ENCODE measurements at regions of chr19 and their contacts with region 1.

Region 1: DNA sequence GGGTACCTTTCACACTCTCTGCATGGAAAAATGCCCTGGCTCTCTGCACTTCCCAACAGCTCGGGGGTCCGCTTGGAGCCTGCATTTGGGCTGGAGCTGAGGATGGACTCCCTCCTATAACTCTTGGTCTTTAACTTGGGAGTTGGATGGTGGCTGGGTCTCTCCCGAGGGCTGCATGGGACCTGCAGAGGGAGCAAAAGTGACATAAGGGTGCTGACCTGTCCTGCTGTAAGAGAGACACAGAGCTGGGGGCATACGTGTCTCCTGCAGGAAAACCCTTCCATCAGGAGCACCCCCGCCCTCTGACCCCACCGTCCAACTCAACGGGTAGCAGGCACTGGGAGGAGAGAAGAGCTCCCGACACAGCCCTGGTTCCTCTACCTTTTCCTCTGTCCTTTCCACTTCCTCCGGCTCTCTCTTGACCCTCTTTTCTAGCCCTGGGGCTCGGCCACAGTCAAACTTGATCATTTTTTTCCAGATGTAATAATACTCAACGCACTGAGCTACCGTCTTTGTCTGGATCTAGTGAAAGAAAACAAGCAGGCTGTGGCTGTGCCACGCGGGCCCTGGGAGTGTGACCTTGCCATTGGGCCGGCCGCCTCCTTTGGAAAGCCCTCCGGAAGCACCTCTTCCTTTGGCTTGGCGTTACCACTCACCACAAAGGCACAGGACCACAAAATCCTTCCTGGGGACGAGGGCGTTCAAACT is 6.8 kb upstream of the NAPA start:
- DNase-seq: no peak
- H3K4me3 ChIP-seq: no peak overlapping the region
- H3K27ac ChIP-seq: peak overlapping the region in 1 of 2 donors; percentile 58
- H3K4me1 ChIP-seq: no peaks in the 10 kb centered on the region
- H3K27me3 ChIP-seq: no peaks in the 10 kb centered on the region
- CTCF ChIP-seq: no peak
- POLR2A ChIP-seq: no peak

Region 2: GRCh38 chr19:47428177-47428894 is 93.3 kb before region 1 on chr19:
- intact Hi-C with region 1: no loop called
- DNase-seq: peak; percentile 90 to 93
- H3K4me3 ChIP-seq: peak overlapping the region in 2 of 3 donors; percentile 22 to 48
- H3K27ac ChIP-seq: peak overlapping the region; percentile 15 to 61
- H3K4me1 ChIP-seq: peaks cover 3 to 13% of the 10 kb centered on the region in 2 donors
- H3K27me3 ChIP-seq: peaks cover 3 to 30% of the 10 kb centered on the region in 2 donors
- CTCF ChIP-seq: no peak
- POLR2A ChIP-seq: no peak

Region 3: DNA sequence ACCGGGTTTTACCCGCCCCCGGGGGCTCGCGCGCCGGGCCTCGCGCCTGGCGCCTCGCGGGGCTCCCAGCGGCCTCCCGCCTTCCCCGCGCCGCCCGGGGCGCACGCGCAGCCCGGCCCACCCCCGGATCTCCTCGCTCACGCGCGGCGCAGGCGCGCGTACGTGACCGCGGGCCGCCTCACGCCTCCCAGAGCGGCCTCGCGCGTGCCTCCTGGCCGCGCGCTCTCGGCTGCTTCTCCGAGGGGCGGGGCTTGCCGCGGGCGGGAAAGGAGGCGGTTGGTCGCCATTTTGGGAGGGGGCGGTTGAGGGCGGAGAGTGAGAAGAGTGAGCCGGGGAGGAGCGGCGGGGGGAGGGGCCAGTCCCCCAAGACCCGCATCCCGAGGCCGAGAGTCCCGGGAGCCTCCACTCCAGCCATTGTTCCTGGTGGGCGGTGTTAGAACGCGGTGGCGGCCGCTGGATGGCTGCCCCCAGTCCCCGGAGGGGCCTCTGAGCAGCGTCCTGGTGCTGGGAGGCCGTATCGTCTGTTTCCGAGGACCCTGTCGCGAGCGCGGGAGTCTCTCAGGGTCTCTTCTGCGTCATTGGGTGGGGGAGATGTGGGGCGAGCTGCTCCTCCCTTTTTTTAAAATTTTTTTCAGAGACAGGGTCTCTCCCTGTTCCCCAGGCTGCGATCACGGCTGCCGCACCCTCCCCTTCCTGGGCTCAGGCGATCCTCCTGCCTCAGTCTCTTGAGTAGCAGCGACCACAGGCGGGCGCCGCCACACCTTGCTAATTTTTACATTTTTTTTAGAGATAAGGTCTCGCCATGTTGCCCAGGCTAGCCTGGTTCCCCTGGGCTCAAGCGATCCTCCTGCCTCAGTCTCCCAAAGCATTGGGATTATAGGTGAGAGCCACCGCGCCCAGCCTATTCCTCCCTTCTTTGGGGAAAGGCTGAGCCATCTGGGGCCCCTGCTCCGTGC is 51.7 kb after region 1 on chr19 and contains the start of gene ZNF541:
- intact Hi-C with region 1: loop called (anchors 1 kb)
- DNase-seq: peak; percentile 43 to 62
- H3K4me3 ChIP-seq: peak within 1 kb of the TSS; percentile 34 to 71 (median 46)
- H3K27ac ChIP-seq: no peak within 1 kb of the TSS
- H3K4me1 ChIP-seq: no peaks in the 10 kb centered on the region
- H3K27me3 ChIP-seq: no peaks in the 10 kb centered on the region
- CTCF ChIP-seq: no peak
- POLR2A ChIP-seq: no peak
- total RNA-seq, gene ZNF541: 0.15 to 1.4 TPM in 2 of 3 donors, not detected in the other

Region 4: GRCh38 chr19:47644762-47645482 is 123.3 kb after region 1 on chr19:
- intact Hi-C with region 1: no loop called
- DNase-seq: no peak
- H3K4me3 ChIP-seq: no peak overlapping the region
- H3K27ac ChIP-seq: peak overlapping the region; percentile 21 to 85
- H3K4me1 ChIP-seq: peaks cover 0 to 5% of the 10 kb centered on the region in 2 donors
- H3K27me3 ChIP-seq: no peaks in the 10 kb centered on the region
- CTCF ChIP-seq: no peak
- POLR2A ChIP-seq: no peak

Region 5: DNA sequence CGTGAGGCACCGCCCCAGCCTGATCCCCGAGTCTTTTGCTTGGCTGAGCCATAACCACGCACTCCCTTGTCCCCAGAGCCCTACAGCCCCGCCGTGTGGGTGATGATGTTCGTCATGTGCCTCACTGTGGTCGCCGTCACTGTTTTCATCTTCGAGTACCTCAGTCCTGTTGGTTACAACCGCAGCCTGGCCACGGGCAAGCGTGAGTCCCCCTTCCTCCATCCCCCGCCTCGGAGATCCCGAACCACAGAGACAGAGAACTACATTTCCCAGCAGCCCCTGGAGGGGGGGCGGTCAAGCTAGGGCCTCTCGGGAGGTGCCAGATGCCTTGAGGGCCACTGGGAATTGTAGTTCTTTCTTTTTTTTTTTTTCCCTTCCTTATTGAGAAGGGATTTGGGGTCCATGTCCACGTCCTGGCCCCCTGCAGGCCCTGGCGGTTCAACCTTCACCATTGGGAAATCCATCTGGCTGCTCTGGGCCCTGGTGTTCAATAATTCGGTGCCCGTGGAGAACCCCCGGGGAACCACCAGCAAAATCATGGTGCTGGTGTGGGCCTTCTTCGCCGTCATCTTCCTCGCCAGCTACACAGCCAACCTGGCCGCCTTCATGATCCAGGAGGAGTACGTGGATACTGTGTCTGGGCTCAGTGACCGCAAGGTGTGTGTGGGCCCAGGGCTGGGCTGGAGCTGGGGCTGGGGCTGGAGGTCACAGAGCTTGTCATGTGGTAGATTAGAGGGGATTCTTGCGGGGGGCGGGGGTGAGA is 897.7 kb after region 1 on chr19:
- intact Hi-C with region 1: no loop called
- DNase-seq: no peak
- H3K4me3 ChIP-seq: no peak overlapping the region
- H3K27ac ChIP-seq: no peak overlapping the region
- H3K4me1 ChIP-seq: no peaks in the 10 kb centered on the region
- H3K27me3 ChIP-seq: peaks cover 0 to 4% of the 10 kb centered on the region in 2 donors
- CTCF ChIP-seq: no peak
- POLR2A ChIP-seq: no peak

Region 6: DNA sequence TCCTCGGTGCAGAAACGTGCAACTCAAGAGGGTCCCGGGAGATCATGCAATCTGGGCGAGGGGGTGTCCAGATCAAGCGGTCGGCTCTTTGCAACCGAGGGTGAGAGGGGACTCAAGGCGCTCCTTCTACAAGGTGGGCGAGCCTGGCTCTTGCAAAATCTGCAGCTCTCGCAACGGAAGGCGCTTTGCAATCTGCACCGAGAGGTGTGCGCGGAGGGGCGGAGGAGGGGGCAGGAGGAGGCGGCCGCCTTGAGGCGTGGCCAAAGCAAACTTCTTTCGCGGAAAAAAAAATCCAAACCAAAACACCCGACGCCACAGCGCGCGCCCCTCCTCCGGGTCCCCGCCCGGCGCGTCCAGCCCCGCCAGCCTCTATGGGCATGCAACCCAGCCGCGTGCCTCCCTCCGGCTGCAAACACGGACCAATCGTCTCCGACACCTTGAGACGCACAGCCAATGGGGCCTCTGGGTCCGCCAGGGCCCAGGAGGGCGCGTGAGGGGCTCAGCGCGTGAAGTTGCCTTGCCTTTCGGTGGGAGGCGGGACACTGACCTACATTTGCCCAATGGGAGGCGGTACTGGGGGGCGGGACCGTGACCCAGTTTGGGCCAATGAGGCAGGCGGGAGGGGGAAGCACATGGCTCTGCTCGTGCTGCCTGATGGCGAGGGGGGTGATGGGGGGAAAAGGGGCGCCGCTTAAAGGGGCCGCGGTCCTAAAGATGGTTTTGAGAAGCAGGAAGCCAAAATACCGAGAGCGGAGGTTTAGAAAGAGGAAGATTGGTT is 1115.7 kb after region 1 on chr19 and contains the start of gene DBP:
- intact Hi-C with region 1: no loop called
- DNase-seq: peak; percentile 100
- H3K4me3 ChIP-seq: peak within 1 kb of the TSS; percentile 63 to 88 (median 77)
- H3K27ac ChIP-seq: peak within 1 kb of the TSS; percentile 99
- H3K4me1 ChIP-seq: peaks cover 0 to 7% of the 10 kb centered on the region in 2 donors
- H3K27me3 ChIP-seq: no peaks in the 10 kb centered on the region
- CTCF ChIP-seq: no peak
- POLR2A ChIP-seq: no peak
- total RNA-seq, gene DBP: 3.9 to 10.8 (median 5.0) TPM